WTC11 (cell line): ENCODE measurements at regions of chr17 and their contacts with region 1.

Region 1: DNA sequence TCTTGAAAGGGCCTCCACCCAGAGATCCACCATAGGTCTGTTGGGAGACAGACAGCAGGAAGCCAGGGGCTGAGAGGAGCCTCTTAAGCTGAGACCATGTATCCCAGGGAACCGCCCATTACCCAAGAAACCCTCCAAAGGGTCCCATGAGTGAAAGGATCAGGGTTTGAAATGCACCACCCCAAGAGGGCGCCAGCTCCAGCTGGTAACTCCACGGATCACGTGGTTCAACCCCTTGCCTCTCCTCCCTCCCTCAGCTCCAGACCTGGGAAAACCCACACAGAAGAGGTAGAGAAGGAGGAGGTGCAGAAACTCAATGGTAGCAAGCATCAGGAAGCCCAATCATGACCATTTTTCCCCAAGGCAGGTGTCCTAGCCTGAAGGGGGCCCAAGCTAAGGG is 148.7 kb downstream of the AIPL1 start:
- DNase-seq: peak; percentile 64
- ATAC-seq: peak; percentile 84
- H3K4me3 Mint-ChIP-seq: no peak overlapping the region
- H3K27ac Mint-ChIP-seq: no peak overlapping the region
- H3K4me1 Mint-ChIP-seq: no peaks in the 10 kb centered on the region
- H3K27me3 Mint-ChIP-seq: no peaks in the 10 kb centered on the region; the same call in 1 of the 2 replicates
- CTCF ChIP-seq: no peak

Region 2: GRCh38 chr17:6413065-6413464 is 126.8 kb after region 1 on chr17:
- CTCF ChIA-PET with region 1: interaction called, 26 read pairs
- POLR2A ChIA-PET with region 1: no interaction called
- DNase-seq: no peak
- ATAC-seq: peak; percentile 78
- H3K4me3 Mint-ChIP-seq: no peak overlapping the region
- H3K27ac Mint-ChIP-seq: no peak overlapping the region
- H3K4me1 Mint-ChIP-seq: peaks cover 7% of the 10 kb centered on the region
- H3K27me3 Mint-ChIP-seq: no peaks in the 10 kb centered on the region
- CTCF ChIP-seq: 0 out of 2 replicates have a peak, but pooled peaks have one; percentile 24

Region 3: DNA sequence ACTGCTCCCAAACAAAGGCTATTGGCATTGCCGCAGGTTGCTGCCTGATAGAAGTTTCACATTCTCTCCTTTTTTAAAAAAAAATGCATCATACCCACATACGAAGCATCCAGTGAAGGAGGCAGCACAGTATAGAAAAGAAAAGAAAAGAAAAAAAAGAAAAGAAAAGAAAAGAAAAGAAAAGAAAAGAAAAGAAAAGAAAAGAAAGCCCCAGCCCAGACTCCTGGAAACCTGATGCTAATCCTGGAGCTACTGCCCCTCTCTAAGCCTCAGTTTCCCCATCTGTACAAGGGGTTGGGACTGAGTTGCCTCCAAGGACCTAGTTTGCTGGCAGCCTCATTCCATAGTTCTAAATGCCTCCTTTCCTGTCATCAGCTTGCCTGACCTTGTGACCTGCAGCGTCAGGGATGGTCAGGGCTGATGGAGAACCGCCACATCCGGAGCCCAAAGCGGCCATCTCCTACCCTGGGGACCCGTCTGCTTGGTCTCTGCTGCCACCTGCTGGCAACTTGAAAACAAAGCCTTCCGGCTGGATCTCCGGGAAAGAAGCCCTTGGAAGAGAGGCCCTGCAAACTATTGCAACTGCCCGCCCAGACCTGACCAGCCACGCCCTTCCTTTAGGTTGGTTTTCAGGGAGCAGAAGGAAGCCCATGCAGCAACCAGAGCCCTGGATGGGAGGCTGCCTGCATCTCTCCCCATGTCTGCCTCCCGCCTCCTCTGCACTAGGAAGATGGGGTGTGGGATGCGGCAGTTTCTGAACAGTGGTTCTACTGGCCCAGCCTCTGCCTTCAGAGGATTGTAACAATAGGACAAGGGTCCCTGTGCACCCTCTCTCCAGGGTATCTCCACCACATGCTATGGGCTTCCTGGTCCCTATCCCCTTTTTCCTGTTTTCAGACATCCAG is 135.7 kb after region 1 on chr17:
- CTCF ChIA-PET with region 1: interaction called, 13 read pairs
- POLR2A ChIA-PET with region 1: no interaction called
- DNase-seq: peak; percentile 90
- ATAC-seq: peak; percentile 76
- H3K4me3 Mint-ChIP-seq: no peak overlapping the region
- H3K27ac Mint-ChIP-seq: no peak overlapping the region
- H3K4me1 Mint-ChIP-seq: peaks cover 20% of the 10 kb centered on the region
- H3K27me3 Mint-ChIP-seq: no peaks in the 10 kb centered on the region
- CTCF ChIP-seq: peak; percentile 82

Region 4: GRCh38 chr17:6454957-6455705 is 168.9 kb after region 1 on chr17:
- CTCF ChIA-PET with region 1: no interaction called
- POLR2A ChIA-PET with region 1: no interaction called
- DNase-seq: peak; percentile 62
- ATAC-seq: peak; percentile 49
- H3K4me3 Mint-ChIP-seq: peak overlapping the region; percentile 63
- H3K27ac Mint-ChIP-seq: no peak overlapping the region
- H3K4me1 Mint-ChIP-seq: peaks cover 45% of the 10 kb centered on the region
- H3K27me3 Mint-ChIP-seq: no peaks in the 10 kb centered on the region; the same call in 1 of the 2 replicates
- CTCF ChIP-seq: no peak